Right ventricle myocardium superior (tissue), 1 donor: ENCODE measurements at regions of chr10 and their contacts with region 1.

Region 1: GRCh38 chr10:113385021-113385999 is 167.5 kb upstream of the HABP2 start:
- DNase-seq: peak; percentile 90
- ATAC-seq: peak; percentile 97

Region 2: GRCh38 chr10:112471878-112472487 is 913.3 kb before region 1 on chr10:
- intact Hi-C with region 1: loop called (anchors 10 kb)
- DNase-seq: no peak
- ATAC-seq: peak; percentile 81

Region 3: DNA sequence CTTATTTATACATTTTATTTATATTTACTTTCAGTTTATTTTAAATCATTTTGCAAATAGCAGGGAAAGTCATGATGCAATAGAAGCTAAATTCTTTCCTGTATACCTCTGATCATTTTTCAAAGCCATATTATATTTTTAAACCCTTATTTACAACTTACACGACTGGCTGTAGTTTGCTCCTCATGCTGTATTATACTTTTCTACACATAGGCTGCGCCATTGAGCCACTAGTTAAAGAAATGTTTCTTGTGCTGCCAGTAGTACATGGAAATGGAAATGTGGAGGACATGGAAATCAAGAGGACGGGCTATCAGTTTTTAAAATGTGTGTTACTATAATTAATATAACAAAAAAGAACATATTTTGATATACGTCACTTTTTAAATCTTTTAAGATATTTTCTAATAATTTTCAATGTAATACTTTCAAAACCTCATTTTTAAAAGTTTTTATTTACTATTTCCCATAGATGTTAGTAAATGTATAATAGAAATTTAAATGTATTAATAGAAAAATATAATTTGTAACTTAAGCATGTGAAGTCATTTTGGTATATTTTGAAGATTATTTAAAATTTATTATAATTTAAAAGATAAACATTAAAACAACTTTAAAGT is 819.8 kb before region 1 on chr10:
- intact Hi-C with region 1: loop called (anchors 5 kb)
- DNase-seq: no peak
- ATAC-seq: peak; percentile 73

Region 4: GRCh38 chr10:112722758-112723157 is 662.6 kb before region 1 on chr10:
- intact Hi-C with region 1: loop called (anchors 2 kb)
- DNase-seq: no peak
- ATAC-seq: no peak

Region 5: GRCh38 chr10:113139699-113140098 is 245.6 kb before region 1 on chr10:
- intact Hi-C with region 1: loop called (anchors 10 kb)
- DNase-seq: no peak
- ATAC-seq: no peak

Region 6: DNA sequence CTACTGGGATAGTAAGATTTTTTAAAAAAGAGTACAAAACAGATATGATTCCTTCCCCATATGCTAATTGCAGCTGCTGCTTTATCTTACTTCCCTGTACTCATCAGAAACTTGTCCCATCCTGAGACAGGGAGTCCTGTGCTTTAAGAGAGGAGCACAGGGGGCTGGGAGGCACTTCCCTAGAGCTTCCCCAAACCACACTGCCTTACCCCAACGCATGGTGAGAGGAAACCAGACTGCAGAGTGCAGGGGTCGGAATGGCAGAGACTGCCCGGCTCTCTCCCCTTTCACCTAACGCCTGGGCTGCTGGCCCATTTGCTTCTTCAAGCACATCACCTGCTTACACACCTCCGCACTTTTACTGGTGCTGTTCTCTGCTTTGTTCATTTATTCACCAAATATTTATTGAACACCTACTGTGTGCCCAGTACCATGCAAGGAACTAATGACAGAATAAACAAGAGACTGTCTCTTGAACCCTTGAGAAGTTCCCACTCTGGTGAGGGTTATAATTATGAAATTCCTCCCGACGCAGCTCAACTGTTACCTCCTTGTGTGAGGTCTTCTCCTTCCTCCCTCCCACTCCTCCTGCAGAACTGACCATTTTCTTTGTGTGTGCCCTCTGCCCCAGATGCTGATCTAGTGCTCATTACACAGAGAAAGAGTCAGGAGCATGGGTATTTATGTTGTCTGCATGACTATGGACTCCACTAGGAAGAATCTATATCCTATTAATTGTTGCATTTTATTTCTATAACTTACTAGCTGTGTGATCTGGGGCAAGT is 145.6 kb before region 1 on chr10:
- intact Hi-C with region 1: no loop called
- DNase-seq: no peak
- ATAC-seq: no peak

Region 7: GRCh38 chr10:113515601-113516000 is 130.3 kb after region 1 on chr10:
- intact Hi-C with region 1: no loop called
- DNase-seq: no peak
- ATAC-seq: no peak